Heart left ventricle (tissue), 16 donors: ENCODE measurements at regions of chr2 and their contacts with region 1.

Region 1: GRCh38 chr2:177229448-177230242 is 17.1 kb downstream of the HNRNPA3 start:
- DNase-seq: no peak
- ATAC-seq: peak in 2 of 4 donors; percentile 29
- H3K4me3 ChIP-seq: no peak overlapping the region
- H3K27ac ChIP-seq: peak overlapping the region in 1 of 12 donors; percentile 4
- H3K4me1 ChIP-seq: peaks cover 0 to 38% (median 10%) of the 10 kb centered on the region in 12 donors
- H3K27me3 ChIP-seq: no peaks in the 10 kb centered on the region
- CTCF ChIP-seq: no peak
- POLR2A ChIP-seq: no peak

Region 2: DNA sequence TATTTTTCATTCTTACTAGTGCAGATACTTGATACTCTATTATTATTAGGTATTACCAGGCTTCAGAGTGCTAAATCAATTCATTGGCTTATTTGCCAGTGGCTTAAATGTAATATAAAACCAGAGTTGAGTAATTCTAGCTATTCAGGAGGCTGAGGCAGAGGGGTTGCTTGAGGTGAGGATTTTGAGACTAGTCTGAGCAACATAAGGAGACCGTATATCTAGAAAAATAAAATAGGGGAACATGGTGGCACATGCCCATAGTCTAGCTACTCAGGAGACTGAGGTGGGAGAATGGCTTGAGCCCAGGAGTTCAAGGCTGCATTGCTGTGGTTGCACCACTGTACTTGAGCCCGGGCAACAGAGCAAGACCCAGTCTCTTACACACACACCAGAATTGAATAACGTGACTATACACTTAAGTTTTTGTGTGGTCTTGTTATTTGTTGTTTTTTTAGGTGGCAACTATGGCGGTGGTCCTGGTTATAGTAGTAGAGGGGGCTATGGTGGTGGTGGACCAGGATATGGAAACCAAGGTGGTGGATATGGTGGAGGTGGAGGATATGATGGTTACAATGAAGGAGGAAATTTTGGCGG is 12.3 kb before region 1 on chr2:
- intact Hi-C with region 1: loop called in 2 of 10 experiments (anchors 2 kb)
- DNase-seq: no peak
- ATAC-seq: no peak
- H3K4me3 ChIP-seq: no peak overlapping the region
- H3K27ac ChIP-seq: no peak overlapping the region
- H3K4me1 ChIP-seq: peaks cover 10 to 69% (median 51%) of the 10 kb centered on the region in 12 donors
- H3K27me3 ChIP-seq: no peaks in the 10 kb centered on the region
- CTCF ChIP-seq: no peak
- POLR2A ChIP-seq: no peak